AG04450 (cell line): ENCODE measurements at regions of chr1 and their contacts with region 1.

Region 1: DNA sequence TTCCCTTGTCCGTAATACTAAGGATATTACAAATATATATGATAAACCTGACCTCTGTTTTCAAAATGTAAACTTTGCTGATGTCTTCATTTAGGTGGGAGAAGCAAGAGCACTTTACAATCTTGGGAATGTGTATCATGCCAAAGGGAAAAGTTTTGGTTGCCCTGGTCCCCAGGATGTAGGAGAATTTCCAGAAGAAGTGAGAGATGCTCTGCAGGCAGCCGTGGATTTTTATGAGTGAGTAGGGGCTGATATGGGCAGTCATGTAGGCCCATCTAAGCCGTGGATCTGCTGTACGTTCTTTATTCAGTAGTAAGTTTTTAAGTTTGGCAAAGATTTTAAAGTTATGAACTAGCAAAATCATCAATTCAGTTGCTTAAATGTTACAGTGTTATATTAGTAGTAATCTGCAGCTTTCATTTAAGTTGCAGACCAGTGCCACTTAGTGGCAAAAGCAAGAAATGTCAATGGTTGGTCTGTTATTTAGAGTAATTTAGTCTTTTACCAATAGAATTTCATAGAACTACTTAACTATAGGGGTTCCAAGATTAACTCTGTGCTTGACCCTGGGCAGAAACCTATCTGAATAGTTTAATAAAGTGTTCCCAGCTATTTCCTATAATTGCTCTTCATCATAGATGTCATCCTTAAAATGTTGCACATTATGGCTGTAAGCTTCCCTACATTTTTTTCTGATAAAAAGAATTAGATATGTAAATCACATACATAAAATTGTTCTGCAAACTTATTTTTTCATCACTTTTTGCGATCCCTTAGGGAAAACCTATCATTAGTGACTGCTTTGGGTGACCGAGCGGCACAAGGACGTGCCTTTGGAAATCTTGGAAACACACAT is 21.3 kb downstream of the GPSM2 start:
- DNase-seq: peak; percentile 34
- H3K4me3 ChIP-seq: no peak overlapping the region
- H3K27ac ChIP-seq: no peak overlapping the region
- H3K27me3 ChIP-seq: no peaks in the 10 kb centered on the region
- CTCF ChIP-seq: peak; percentile 68

Region 2: DNA sequence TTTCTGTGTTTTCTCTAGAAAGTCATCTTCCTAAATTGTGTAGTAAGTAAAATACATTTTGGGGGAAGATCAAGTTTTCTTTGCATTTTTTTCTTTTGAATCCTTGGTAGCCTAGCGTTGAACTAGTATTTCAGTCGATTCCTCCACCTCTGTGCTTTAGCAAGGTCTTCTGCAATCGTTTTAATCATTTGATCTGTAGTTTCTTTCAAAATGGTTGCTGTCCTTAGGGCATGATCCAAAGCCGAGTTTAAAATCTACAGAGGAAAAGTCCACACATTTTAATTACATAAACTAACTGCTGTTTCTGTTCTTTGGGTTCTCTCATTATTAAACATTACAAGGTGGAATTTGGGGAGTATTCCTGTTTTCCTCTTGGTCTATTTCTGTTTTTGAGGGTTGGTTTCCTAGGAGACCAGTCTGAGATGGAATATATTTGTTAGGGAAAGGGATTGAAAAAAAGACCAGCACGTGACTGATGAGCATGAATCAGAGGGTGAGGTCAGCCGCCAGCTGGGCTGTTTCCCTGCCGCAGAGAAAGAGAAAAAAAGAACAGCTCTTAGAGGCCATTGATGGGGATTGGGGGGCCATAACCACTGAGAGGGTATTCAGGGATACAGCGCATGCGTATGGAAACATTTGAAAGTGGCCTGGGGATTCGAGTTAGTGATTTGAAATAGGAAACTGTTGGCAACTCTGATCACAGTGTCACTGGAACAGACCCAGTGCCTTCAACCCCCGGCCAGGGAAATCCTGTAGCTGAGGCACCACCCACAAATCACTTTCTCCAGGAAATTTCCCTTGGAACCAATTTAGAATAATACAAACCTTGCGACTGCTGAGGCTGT is 81.8 kb before region 1 on chr1:
- CTCF ChIA-PET with region 1: interaction called, 16 read pairs
- POLR2A ChIA-PET with region 1: no interaction called
- DNase-seq: peak; percentile 80
- H3K4me3 ChIP-seq: peak overlapping the region; percentile 37
- H3K27ac ChIP-seq: peak overlapping the region; percentile 97
- H3K27me3 ChIP-seq: no peaks in the 10 kb centered on the region
- CTCF ChIP-seq: no peak

Region 3: GRCh38 chr1:108881369-108881768 is 16.7 kb before region 1 on chr1:
- CTCF ChIA-PET with region 1: interaction called, 10 read pairs
- POLR2A ChIA-PET with region 1: no interaction called
- DNase-seq: no peak
- H3K4me3 ChIP-seq: no peak overlapping the region
- H3K27ac ChIP-seq: no peak overlapping the region
- H3K27me3 ChIP-seq: no peaks in the 10 kb centered on the region
- CTCF ChIP-seq: no peak

Region 4: DNA sequence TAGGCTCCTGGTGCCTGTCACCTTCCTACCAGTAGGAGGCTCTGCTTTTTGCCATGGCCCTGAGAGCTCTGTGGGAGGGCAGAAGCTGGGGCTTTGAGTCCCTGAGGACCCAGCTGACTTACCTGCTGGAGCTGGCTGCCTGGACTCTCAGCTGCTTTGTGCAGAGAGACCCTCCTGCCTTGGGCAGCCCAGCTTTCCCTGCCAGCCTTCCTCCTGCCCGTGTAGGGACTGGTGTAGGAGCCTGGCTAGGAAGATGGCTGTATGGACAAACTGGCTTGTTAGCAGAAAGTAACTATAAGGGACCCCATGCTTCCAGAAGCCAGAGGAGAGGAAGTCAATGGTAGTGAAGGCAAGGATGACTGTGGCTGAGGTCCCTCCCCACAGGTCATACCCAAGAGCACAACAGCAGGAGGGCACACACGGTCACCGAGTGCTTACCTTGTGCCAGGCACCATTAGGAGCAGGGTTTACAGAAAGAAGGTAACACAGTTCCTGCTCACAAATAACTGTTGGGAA is 341.5 kb after region 1 on chr1:
- CTCF ChIA-PET with region 1: no interaction called
- POLR2A ChIA-PET with region 1: no interaction called
- DNase-seq: no peak
- H3K4me3 ChIP-seq: no peak overlapping the region
- H3K27ac ChIP-seq: peak overlapping the region; percentile 73
- H3K27me3 ChIP-seq: no peaks in the 10 kb centered on the region
- CTCF ChIP-seq: peak; percentile 66